ENCODE measurements at regions of chr3 and their contacts with region 1.

Region 1: GRCh38 chr3:42118762-42119361 is 27.7 kb downstream of the TRAK1 start:
- DNase-seq: peak; percentile 78
- H3K4me3 Mint-ChIP-seq: peak overlapping the region; percentile 40
- H3K27ac Mint-ChIP-seq: peak overlapping the region; percentile 96
- H3K4me1 Mint-ChIP-seq: peaks cover 67% of the 10 kb centered on the region
- H3K27me3 Mint-ChIP-seq: no peaks in the 10 kb centered on the region
- CTCF ChIP-seq: peak; percentile 42

Region 2: GRCh38 chr3:42129014-42129953 is 10.4 kb after region 1 on chr3:
- CTCF ChIA-PET with region 1: interaction called, 15 read pairs
- intact Hi-C with region 1: no loop called
- DNase-seq: peak; percentile 84
- H3K4me3 Mint-ChIP-seq: peak overlapping the region; percentile 72
- H3K27ac Mint-ChIP-seq: peak overlapping the region; percentile 100
- H3K4me1 Mint-ChIP-seq: peaks cover 48% of the 10 kb centered on the region
- H3K27me3 Mint-ChIP-seq: no peaks in the 10 kb centered on the region
- CTCF ChIP-seq: no peak

Region 3: DNA sequence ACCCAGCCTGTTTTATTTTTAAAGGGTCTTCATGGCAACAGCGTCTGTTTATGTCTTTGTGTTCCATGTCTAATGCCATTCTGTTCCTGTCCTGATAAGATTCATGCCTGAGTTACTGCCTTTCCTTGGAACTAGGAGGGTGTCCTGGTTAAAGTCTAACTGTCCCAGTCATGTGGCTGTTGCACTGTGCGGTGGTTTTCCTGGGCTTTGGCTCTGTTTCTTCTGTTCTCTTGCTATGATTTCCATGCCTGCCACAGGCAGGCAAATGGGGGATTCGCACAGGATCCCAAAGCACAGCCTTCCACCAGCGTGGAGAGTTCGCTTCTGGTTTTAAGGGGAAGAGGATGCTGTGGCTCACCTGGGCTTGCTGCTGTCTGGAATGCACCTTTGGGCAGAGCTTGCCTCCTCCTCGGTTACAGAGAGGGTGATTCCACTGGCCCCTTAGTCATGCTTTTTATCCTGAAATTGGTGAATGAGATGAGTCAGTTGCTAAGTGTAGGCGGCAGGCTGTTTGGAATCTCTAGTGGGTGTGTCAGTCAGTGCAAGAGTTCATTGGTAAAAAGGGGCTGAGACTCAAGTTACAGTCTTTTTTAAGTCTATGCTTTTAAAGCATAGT is 60.4 kb after region 1 on chr3:
- CTCF ChIA-PET with region 1: interaction called, 16 read pairs
- intact Hi-C with region 1: no loop called
- DNase-seq: peak; percentile 74
- H3K4me3 Mint-ChIP-seq: peak overlapping the region; percentile 60
- H3K27ac Mint-ChIP-seq: peak overlapping the region; percentile 87
- H3K4me1 Mint-ChIP-seq: peaks cover 55% of the 10 kb centered on the region
- H3K27me3 Mint-ChIP-seq: no peaks in the 10 kb centered on the region
- CTCF ChIP-seq: no peak

Region 4: DNA sequence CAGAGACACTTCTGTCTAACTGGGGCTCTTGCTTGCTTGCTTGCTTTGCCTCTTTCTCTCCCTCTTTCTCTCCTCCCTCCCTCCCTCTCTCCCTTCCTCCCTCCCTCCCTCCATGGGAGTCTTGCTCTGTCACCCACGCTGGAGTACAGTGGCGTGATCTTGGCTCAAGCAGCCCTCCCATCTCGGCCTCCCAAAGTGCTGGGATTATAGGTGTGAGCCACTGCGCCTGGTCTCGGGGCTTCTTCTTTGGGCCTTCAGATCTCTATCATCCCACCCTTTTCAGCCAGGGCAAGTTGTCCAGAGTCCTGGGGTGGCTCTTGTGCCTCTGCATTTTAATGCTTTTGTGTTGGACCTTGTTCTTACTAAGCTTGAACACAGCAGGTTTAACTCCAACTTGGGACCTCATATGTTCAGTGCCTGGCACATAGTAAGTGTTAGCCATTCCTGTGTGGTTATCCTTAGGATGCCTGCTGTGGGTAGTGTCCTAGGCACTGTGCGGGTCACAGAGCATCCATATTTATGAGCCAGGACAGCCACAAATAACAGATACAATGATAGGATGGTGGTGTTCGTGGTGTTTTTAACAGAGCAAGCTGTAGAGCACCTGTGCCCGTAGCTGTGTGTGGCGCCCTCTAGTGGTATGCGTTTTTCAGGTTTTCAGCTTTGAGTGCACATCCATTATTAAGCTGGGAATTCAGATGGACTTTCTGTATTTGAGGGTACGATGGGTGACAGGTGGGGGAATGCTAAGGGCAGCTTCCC is 72.0 kb after region 1 on chr3:
- CTCF ChIA-PET with region 1: interaction called, 119 read pairs
- intact Hi-C with region 1: loop called (anchors 1 kb)
- DNase-seq: peak; percentile 85
- H3K4me3 Mint-ChIP-seq: no peak overlapping the region
- H3K27ac Mint-ChIP-seq: peak overlapping the region; percentile 36
- H3K4me1 Mint-ChIP-seq: peaks cover 40% of the 10 kb centered on the region
- H3K27me3 Mint-ChIP-seq: no peaks in the 10 kb centered on the region
- CTCF ChIP-seq: peak; percentile 86

Region 5: GRCh38 chr3:42443819-42444436 is 325.1 kb after region 1 on chr3:
- CTCF ChIA-PET with region 1: no interaction called
- intact Hi-C with region 1: loop called (anchors 5 kb)
- DNase-seq: peak; percentile 90
- H3K4me3 Mint-ChIP-seq: no peak overlapping the region
- H3K27ac Mint-ChIP-seq: no peak overlapping the region
- H3K4me1 Mint-ChIP-seq: peaks cover 9% of the 10 kb centered on the region
- H3K27me3 Mint-ChIP-seq: peaks cover 18% of the 10 kb centered on the region
- CTCF ChIP-seq: peak; percentile 78

Measured in Calu3 (cell line).